GM10248 (cell line): ENCODE measurements at regions of chr11 and their contacts with region 1.

Region 1: DNA sequence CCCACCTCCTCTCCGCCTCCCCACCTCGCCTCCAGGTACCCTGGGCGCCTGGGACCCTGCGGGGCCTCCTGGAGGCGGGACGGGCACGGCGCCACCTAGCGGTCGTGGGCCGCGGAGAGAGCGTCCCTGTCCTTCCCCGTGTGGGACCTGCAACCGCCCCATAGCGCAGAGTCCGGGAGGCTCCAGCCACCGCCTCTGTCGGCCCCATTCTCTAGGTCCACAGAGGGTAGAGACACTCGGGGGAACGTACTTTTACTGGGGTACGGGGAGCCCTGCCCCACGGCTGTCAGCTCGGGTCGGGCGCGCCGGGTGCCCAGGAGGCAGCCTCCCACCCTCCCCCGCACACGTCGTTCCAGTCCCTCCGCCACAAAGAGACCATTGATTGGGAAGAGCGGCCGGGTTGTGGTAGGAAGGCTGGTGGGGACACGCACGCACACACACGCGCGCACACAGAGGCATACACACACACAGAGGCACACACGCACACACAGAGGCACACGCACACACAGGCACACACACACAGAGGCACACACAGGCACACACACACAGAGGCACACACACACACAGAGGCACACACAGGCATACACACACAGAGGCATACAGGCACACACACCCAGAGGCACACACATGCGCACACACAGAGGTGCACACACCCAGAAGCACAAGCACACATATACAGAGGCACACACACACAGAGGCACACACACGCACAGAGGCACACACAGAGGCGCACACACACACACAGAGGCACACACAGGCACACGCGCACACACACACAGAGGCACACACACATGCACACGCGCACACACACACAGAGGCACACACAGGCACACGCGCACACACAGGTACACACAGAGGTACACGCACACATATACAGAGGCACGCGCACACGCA is 12.6 kb upstream of the NECTIN1 start:
- DNase-seq: peak; percentile 87
- CTCF ChIP-seq: peak; percentile 92

Region 2: DNA sequence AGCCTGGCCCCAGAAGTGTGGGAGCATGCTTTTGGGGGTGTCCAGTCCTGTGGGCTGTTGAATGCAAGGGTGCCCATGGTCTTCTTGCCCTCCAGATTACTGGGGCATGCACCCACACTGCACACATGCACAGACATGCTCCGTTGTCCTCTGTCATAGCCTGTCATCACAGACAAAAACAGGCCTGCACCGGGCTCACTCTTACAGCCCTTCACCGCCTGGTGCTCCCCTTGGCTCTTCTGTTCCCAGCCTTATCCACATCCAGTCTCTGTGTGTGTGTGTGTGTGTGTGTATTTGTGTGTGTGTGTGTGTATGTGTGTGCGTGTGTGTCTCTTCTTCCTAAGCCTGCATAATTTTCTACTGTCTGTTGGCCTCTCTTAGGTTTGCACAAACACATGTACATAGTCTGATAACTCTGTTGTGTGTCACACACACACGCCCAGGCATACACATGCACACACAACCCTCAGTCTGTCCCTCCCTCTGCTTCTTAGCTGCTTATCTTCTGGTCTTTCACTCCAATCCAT is 10.8 kb after region 1 on chr11:
- CTCF ChIA-PET with region 1: interaction called, 14 read pairs
- POLR2A ChIA-PET with region 1: no interaction called
- DNase-seq: no peak
- CTCF ChIP-seq: no peak